ENCODE measurements at regions of chr12 and their contacts with region 1.

Region 1: GRCh38 chr12:93019975-93020630 is 91.0 kb upstream of the EEA1 start:
- DNase-seq: peak; percentile 92 to 96
- H3K4me3 ChIP-seq: no peak overlapping the region
- H3K4me3 Mint-ChIP-seq: peak overlapping the region; percentile 13
- H3K27ac Mint-ChIP-seq: peak overlapping the region; percentile 89
- H3K4me1 ChIP-seq: peaks cover 89% of the 10 kb centered on the region
- H3K4me1 Mint-ChIP-seq: peaks cover 63% of the 10 kb centered on the region
- H3K27me3 ChIP-seq: no peaks in the 10 kb centered on the region
- H3K27me3 Mint-ChIP-seq: no peaks in the 10 kb centered on the region
- CTCF ChIP-seq: no peak

Region 2: GRCh38 chr12:92943482-92944250 is 76.4 kb before region 1 on chr12:
- CTCF ChIA-PET with region 1: no interaction called
- POLR2A ChIA-PET with region 1: no interaction called
- intact Hi-C with region 1: loop called (anchors 1 kb)
- DNase-seq: no peak
- H3K4me3 ChIP-seq: no peak overlapping the region
- H3K4me3 Mint-ChIP-seq: no peak overlapping the region
- H3K27ac Mint-ChIP-seq: peak overlapping the region; percentile 80
- H3K4me1 ChIP-seq: peaks cover 43% of the 10 kb centered on the region
- H3K4me1 Mint-ChIP-seq: peaks cover 16% of the 10 kb centered on the region
- H3K27me3 ChIP-seq: no peaks in the 10 kb centered on the region
- H3K27me3 Mint-ChIP-seq: no peaks in the 10 kb centered on the region
- CTCF ChIP-seq: peak; percentile 12

Region 3: DNA sequence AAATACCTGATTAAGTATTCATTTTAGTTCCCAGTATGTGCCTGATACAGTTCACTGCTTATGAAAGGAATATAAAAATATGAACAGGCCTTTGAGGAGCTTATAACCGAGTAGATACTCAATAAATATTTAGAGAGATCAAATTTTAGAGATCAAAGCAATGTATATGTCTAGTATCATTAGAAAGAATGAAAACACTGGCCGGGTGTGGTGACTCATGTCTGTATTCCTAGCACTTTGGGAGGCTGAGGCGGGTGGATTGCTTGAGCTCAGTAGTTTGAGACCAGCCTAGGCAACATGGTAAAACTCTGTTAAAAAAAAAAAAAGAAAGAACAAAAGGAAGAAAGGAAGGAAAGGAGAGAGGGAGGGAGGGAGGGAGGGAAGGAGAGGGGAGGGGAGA is 22.2 kb after region 1 on chr12:
- CTCF ChIA-PET with region 1: interaction called, 8 read pairs
- POLR2A ChIA-PET with region 1: interaction called, 5 read pairs
- intact Hi-C with region 1: loop called (anchors 1 kb)
- DNase-seq: peak; percentile 72 to 84
- H3K4me3 ChIP-seq: no peak overlapping the region
- H3K4me3 Mint-ChIP-seq: peak overlapping the region; percentile 37
- H3K27ac Mint-ChIP-seq: peak overlapping the region; percentile 87
- H3K4me1 ChIP-seq: peaks cover 46% of the 10 kb centered on the region
- H3K4me1 Mint-ChIP-seq: peaks cover 51% of the 10 kb centered on the region
- H3K27me3 ChIP-seq: no peaks in the 10 kb centered on the region
- H3K27me3 Mint-ChIP-seq: no peaks in the 10 kb centered on the region
- CTCF ChIP-seq: no peak

Region 4: GRCh38 chr12:93121729-93122488 is 101.8 kb after region 1 on chr12:
- CTCF ChIA-PET with region 1: interaction called, 5 read pairs
- POLR2A ChIA-PET with region 1: interaction called, 10 read pairs
- intact Hi-C with region 1: loop called (anchors 1 kb)
- DNase-seq: no peak
- H3K4me3 ChIP-seq: peak overlapping the region; percentile 24
- H3K4me3 Mint-ChIP-seq: peak overlapping the region; percentile 74
- H3K27ac Mint-ChIP-seq: peak overlapping the region; percentile 95
- H3K4me1 ChIP-seq: peaks cover 67% of the 10 kb centered on the region
- H3K4me1 Mint-ChIP-seq: peaks cover 50% of the 10 kb centered on the region
- H3K27me3 ChIP-seq: no peaks in the 10 kb centered on the region
- H3K27me3 Mint-ChIP-seq: no peaks in the 10 kb centered on the region
- CTCF ChIP-seq: no peak

Region 5: DNA sequence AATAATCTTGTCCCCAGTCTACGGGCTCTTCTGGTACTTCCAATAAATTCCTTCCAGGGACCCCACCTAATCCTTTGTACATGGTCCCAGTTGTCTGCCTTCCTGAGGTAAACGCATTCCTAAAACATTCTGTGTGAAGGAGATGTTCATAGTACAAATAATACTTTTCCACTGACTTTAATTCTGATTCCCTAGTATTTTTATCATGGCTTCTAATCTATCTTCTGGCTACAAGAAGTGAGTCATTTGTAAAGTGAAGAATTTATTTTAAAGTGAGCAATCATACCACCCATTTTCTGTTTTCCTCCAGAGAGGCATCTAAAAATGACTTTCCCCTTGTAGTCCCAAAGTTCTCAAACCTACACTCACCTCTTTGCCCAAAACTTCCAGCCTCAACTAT is 291.7 kb after region 1 on chr12:
- CTCF ChIA-PET with region 1: no interaction called
- POLR2A ChIA-PET with region 1: no interaction called
- intact Hi-C with region 1: loop called (anchors 1 kb)
- DNase-seq: no peak
- H3K4me3 ChIP-seq: no peak overlapping the region
- H3K4me3 Mint-ChIP-seq: no peak overlapping the region
- H3K27ac Mint-ChIP-seq: peak overlapping the region; percentile 34
- H3K4me1 ChIP-seq: peaks cover 45% of the 10 kb centered on the region
- H3K4me1 Mint-ChIP-seq: peaks cover 22% of the 10 kb centered on the region
- H3K27me3 ChIP-seq: no peaks in the 10 kb centered on the region
- H3K27me3 Mint-ChIP-seq: no peaks in the 10 kb centered on the region
- CTCF ChIP-seq: no peak

Measured in Caco-2 (cell line).